GM12878 (cell line): ENCODE measurements at regions of chr17 and their contacts with region 1.

Region 1: GRCh38 chr17:8894673-8895578 is 27.5 kb upstream of the PIK3R6 start:
- DNase-seq: peak; percentile 65
- ATAC-seq: peak; percentile 66
- H3K4me3 ChIP-seq: peak overlapping the region; percentile 14; the same call in 1 of the 2 replicates
- H3K27ac ChIP-seq: peak overlapping the region; percentile 98
- H3K4me1 ChIP-seq: peaks cover 71% of the 10 kb centered on the region
- H3K27me3 ChIP-seq: no peaks in the 10 kb centered on the region
- CTCF ChIP-seq: peak; percentile 74 to 90 (median 83)
- EP300 ChIP-seq: no peak
- POLR2A ChIP-seq: no peak; the same call in none of the 2 replicates
- RAD21 ChIP-seq: peak; percentile 84

Region 2: GRCh38 chr17:8745586-8746500 is 149.1 kb before region 1 on chr17:
- CTCF ChIA-PET with region 1: interaction called, 69 read pairs
- POLR2A ChIA-PET with region 1: no interaction called
- RAD21 ChIA-PET with region 1: interaction called, 15 read pairs
- SMC1A ChIA-PET with region 1: interaction called, 12 read pairs
- in situ Hi-C with region 1: no loop called
- intact Hi-C with region 1: no loop called
- DNase-seq: peak; percentile 4
- ATAC-seq: peak; percentile 95
- H3K4me3 ChIP-seq: peak overlapping the region; percentile 85
- H3K27ac ChIP-seq: peak overlapping the region; percentile 30; the same call in 1 of the 2 replicates
- H3K4me1 ChIP-seq: peaks cover 5% of the 10 kb centered on the region
- H3K27me3 ChIP-seq: no peaks in the 10 kb centered on the region; a peak in 1 of 4 replicates
- CTCF ChIP-seq: peak; percentile 71 to 88 (median 82)
- EP300 ChIP-seq: no peak
- POLR2A ChIP-seq: no peak; the same call in none of the 2 replicates
- RAD21 ChIP-seq: peak; percentile 70

Region 3: GRCh38 chr17:8806926-8807550 is 87.9 kb before region 1 on chr17:
- CTCF ChIA-PET with region 1: interaction called, 14 read pairs
- POLR2A ChIA-PET with region 1: interaction called, 14 read pairs
- RAD21 ChIA-PET with region 1: interaction called, 33 read pairs
- SMC1A ChIA-PET with region 1: interaction called, 25 read pairs
- in situ Hi-C with region 1: no loop called
- intact Hi-C with region 1: loop called (anchors 5 kb)
- DNase-seq: peak; percentile 98
- ATAC-seq: peak; percentile 96
- H3K4me3 ChIP-seq: no peak overlapping the region; the same call in 1 of the 2 replicates
- H3K27ac ChIP-seq: peak overlapping the region; percentile 96
- H3K4me1 ChIP-seq: peaks cover 43% of the 10 kb centered on the region
- H3K27me3 ChIP-seq: no peaks in the 10 kb centered on the region
- CTCF ChIP-seq: no peak
- EP300 ChIP-seq: peak; percentile 56 to 62; a peak in 3 of 4 replicates
- POLR2A ChIP-seq: peak; percentile 71
- RAD21 ChIP-seq: no peak

Region 4: DNA sequence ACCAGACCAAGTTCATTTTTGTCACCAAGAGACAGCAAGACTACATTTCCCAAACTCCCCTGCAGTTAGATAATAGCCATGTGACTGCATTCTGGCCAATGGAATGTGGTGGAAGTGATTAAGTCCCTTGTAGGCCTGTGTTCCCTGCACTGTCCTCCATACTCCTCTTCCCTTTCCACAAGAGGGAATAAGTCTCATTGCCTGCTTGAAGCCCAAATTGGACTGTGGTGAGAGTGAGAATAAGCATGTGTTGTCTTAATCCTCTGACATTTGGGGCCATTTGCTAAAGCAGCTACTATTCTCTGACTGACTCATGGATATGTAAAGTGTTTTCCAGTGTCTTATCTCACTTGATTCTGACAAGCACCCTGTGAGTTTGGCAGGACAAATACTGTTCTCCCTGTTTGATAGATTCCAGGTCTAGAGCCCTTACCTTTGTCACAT is 48.1 kb before region 1 on chr17:
- CTCF ChIA-PET with region 1: interaction called, 22 read pairs
- POLR2A ChIA-PET with region 1: interaction called, 6 read pairs
- RAD21 ChIA-PET with region 1: interaction called, 17 read pairs
- SMC1A ChIA-PET with region 1: interaction called, 28 read pairs
- in situ Hi-C with region 1: no loop called
- intact Hi-C with region 1: no loop called
- DNase-seq: no peak
- ATAC-seq: peak; percentile 65
- H3K4me3 ChIP-seq: no peak overlapping the region
- H3K27ac ChIP-seq: peak overlapping the region; percentile 42
- H3K4me1 ChIP-seq: peaks cover 42% of the 10 kb centered on the region
- H3K27me3 ChIP-seq: no peaks in the 10 kb centered on the region
- CTCF ChIP-seq: no peak
- EP300 ChIP-seq: no peak
- POLR2A ChIP-seq: no peak
- RAD21 ChIP-seq: no peak

Region 5: GRCh38 chr17:8941520-8941919 is 46.6 kb after region 1 on chr17:
- CTCF ChIA-PET with region 1: interaction called, 13 read pairs
- POLR2A ChIA-PET with region 1: interaction called, 25 read pairs
- RAD21 ChIA-PET with region 1: interaction called, 14 read pairs
- SMC1A ChIA-PET with region 1: interaction called, 37 read pairs
- in situ Hi-C with region 1: no loop called
- intact Hi-C with region 1: loop called (anchors 1 kb)
- DNase-seq: no peak
- ATAC-seq: peak; percentile 68
- H3K4me3 ChIP-seq: peak overlapping the region; percentile 15; the same call in 1 of the 2 replicates
- H3K27ac ChIP-seq: peak overlapping the region; percentile 94
- H3K4me1 ChIP-seq: peaks cover 45% of the 10 kb centered on the region
- H3K27me3 ChIP-seq: no peaks in the 10 kb centered on the region
- CTCF ChIP-seq: no peak
- EP300 ChIP-seq: peak; percentile 61 to 82
- POLR2A ChIP-seq: 0 out of 2 replicates have a peak, but pooled peaks have one; percentile 13
- RAD21 ChIP-seq: no peak

Region 6: GRCh38 chr17:8965394-8966168 is 70.7 kb after region 1 on chr17 and contains the start of gene PIK3R5:
- CTCF ChIA-PET with region 1: interaction called, 19 read pairs
- POLR2A ChIA-PET with region 1: interaction called, 18 read pairs
- RAD21 ChIA-PET with region 1: interaction called, 53 read pairs
- SMC1A ChIA-PET with region 1: interaction called, 208 read pairs
- in situ Hi-C with region 1: no loop called
- intact Hi-C with region 1: no loop called
- DNase-seq: no peak
- ATAC-seq: peak; percentile 79
- H3K4me3 ChIP-seq: peak within 1 kb of the TSS; percentile 90
- H3K27ac ChIP-seq: peak within 1 kb of the TSS; percentile 80
- H3K4me1 ChIP-seq: peaks cover 28% of the 10 kb centered on the region
- H3K27me3 ChIP-seq: no peaks in the 10 kb centered on the region
- CTCF ChIP-seq: peak in 1 of 3 experiments; percentile 27; a peak in 2 of 6 replicates
- EP300 ChIP-seq: no peak
- POLR2A ChIP-seq: peak; percentile 87
- RAD21 ChIP-seq: no peak
- polyA plus RNA-seq, gene PIK3R5: 9.5 to 9.6 TPM